Heart left ventricle (tissue), 16 donors: ENCODE measurements at regions of chr22 and their contacts with region 1.

Region 1: DNA sequence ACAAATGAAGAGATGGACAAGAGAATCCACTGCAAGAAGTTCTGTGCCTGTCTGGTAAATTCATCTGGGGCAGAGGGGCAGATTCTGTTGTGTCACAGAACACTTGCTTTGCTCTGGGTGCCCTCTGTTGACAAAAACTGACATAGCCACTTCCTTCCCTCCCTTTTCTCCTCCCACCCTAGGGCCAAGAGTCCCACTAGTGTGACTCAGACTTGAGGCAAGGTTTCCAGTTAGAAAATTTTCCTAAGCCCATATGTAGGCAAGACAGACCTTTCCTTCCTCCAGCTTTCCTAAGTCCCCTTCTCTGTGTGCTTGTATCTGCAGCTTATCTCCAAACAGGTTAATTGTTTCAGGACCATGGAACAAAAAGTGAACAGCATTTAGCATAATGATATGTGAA is 106.8 kb downstream of the RBFOX2 start:
- DNase-seq: peak in 4 of 5 donors; percentile 69 to 78 (median 71)
- ATAC-seq: peak; percentile 76 to 92 (median 89)
- H3K4me3 ChIP-seq: no peak overlapping the region
- H3K27ac ChIP-seq: peak overlapping the region in 7 of 12 donors; percentile 9 to 70 (median 26)
- H3K4me1 ChIP-seq: peaks cover 0 to 67% (median 43%) of the 10 kb centered on the region in 12 donors
- H3K27me3 ChIP-seq: no peaks in the 10 kb centered on the region
- CTCF ChIP-seq: peak; percentile 50 to 87 (median 76)
- POLR2A ChIP-seq: no peak

Region 2: GRCh38 chr22:35430897-35431322 is 490.9 kb before region 1 on chr22:
- intact Hi-C with region 1: loop called in 5 of 10 experiments (anchors 5 to 10 kb)
- DNase-seq: peak; percentile 87 to 93 (median 91)
- ATAC-seq: peak; percentile 95 to 98 (median 98)
- H3K4me3 ChIP-seq: no peak overlapping the region
- H3K27ac ChIP-seq: peak overlapping the region in 6 of 12 donors; percentile 5 to 67 (median 48)
- H3K4me1 ChIP-seq: peaks cover 0 to 13% (median 7%) of the 10 kb centered on the region in 12 donors
- H3K27me3 ChIP-seq: no peaks in the 10 kb centered on the region
- CTCF ChIP-seq: peak; percentile 94 to 98 (median 96)
- POLR2A ChIP-seq: no peak

Region 3: DNA sequence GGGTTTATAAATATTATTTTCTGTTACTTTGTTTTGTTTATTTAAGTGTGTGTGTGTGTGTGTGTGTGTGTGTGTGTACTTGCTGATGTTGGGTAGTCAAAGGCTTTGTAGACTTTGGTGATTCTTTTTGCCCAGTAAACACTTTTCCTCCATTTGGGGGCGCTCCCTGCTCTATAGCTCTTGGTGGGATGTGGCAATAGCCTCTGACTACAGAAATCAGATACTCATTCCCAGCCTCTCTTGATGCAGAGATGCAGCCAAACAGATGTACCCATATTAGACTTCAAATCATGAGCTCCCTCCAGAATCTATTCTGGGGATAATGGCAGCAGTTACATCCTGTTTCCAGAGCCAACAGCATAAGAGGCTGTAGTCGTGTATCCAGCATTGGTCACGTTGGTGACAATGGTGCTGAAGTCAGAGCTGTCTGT is 237.5 kb before region 1 on chr22:
- intact Hi-C with region 1: loop called in 3 of 10 experiments (anchors 2 to 5 kb)
- DNase-seq: peak in 4 of 5 donors; percentile 12 to 44 (median 26)
- ATAC-seq: peak; percentile 84 to 97 (median 94)
- H3K4me3 ChIP-seq: no peak overlapping the region
- H3K27ac ChIP-seq: peak overlapping the region in 1 of 12 donors; percentile 4
- H3K4me1 ChIP-seq: peaks cover 0 to 6% (median 0%) of the 10 kb centered on the region in 12 donors
- H3K27me3 ChIP-seq: no peaks in the 10 kb centered on the region
- CTCF ChIP-seq: peak in 7 of 12 donors; percentile 15 to 46 (median 26)
- POLR2A ChIP-seq: no peak

Region 4: GRCh38 chr22:35749808-35750207 is 172.0 kb before region 1 on chr22:
- intact Hi-C with region 1: loop called in 4 of 10 experiments (anchors 5 to 10 kb)
- DNase-seq: no peak
- ATAC-seq: peak in 2 of 4 donors; percentile 20 to 30
- H3K4me3 ChIP-seq: no peak overlapping the region
- H3K27ac ChIP-seq: no peak overlapping the region
- H3K4me1 ChIP-seq: peaks cover 0 to 48% (median 28%) of the 10 kb centered on the region in 12 donors
- H3K27me3 ChIP-seq: no peaks in the 10 kb centered on the region
- CTCF ChIP-seq: no peak
- POLR2A ChIP-seq: no peak

Region 5: GRCh38 chr22:35961480-35962295 is 39.9 kb after region 1 on chr22:
- intact Hi-C with region 1: no loop called
- DNase-seq: peak in 4 of 5 donors; percentile 59 to 81 (median 70)
- ATAC-seq: peak; percentile 89 to 97 (median 94)
- H3K4me3 ChIP-seq: peak overlapping the region in 5 of 12 donors; percentile 12 to 35 (median 19)
- H3K27ac ChIP-seq: peak overlapping the region; percentile 63 to 91 (median 80)
- H3K4me1 ChIP-seq: peaks cover 7 to 55% (median 36%) of the 10 kb centered on the region in 12 donors
- H3K27me3 ChIP-seq: no peaks in the 10 kb centered on the region
- CTCF ChIP-seq: no peak
- POLR2A ChIP-seq: no peak

Region 6: DNA sequence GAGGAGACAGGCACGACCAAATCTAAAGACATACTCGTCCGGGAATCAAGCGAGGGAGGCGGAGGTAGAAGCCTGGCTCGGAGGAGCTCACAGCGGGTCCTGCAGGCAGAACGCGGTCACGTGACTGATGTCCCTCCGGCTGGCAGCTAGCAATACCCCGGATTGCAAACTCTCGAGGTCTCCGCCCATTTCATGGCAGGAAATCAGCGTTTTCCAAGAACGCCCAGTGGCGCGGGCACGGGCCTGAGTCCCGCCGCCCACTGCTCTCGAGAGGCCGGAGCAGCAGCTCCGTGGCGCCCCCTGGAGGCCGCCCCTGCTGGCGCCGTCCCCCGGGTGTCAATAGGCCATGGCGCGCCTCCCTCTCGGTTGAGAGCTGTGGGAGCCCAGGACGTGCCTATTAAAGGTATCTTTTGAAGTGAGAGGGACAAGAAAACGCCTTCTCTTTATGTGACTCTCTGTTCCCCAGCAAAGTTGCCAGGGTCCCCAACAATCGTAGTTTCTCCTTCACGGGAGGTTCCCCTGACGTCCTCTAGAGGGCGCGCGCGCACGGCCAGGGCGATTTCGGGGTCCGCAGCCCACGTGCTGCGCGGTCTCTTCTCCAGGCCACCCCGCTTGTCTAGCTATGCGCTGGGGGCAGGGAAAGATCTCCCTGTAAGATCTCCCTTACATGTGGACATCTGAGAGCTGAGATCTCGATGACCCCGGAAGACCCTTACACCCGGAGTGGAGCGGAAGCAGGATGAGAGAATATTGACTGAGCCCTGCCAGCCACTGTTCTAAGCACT is 144.2 kb after region 1 on chr22:
- intact Hi-C with region 1: loop called in 1 of 10 experiments (anchors 5 kb)
- DNase-seq: peak; percentile 88 to 94 (median 92)
- ATAC-seq: peak; percentile 92 to 94 (median 93)
- H3K4me3 ChIP-seq: peak overlapping the region; percentile 15 to 69 (median 58)
- H3K27ac ChIP-seq: peak overlapping the region; percentile 72 to 91 (median 82)
- H3K4me1 ChIP-seq: peaks cover 0 to 18% (median 6%) of the 10 kb centered on the region in 12 donors
- H3K27me3 ChIP-seq: no peaks in the 10 kb centered on the region
- CTCF ChIP-seq: peak; percentile 100
- POLR2A ChIP-seq: peak in 1 of 2 donors; percentile 32